Endothelial cell of umbilical vein (primary cell): ENCODE measurements at regions of chr2 and their contacts with region 1.

Region 1: DNA sequence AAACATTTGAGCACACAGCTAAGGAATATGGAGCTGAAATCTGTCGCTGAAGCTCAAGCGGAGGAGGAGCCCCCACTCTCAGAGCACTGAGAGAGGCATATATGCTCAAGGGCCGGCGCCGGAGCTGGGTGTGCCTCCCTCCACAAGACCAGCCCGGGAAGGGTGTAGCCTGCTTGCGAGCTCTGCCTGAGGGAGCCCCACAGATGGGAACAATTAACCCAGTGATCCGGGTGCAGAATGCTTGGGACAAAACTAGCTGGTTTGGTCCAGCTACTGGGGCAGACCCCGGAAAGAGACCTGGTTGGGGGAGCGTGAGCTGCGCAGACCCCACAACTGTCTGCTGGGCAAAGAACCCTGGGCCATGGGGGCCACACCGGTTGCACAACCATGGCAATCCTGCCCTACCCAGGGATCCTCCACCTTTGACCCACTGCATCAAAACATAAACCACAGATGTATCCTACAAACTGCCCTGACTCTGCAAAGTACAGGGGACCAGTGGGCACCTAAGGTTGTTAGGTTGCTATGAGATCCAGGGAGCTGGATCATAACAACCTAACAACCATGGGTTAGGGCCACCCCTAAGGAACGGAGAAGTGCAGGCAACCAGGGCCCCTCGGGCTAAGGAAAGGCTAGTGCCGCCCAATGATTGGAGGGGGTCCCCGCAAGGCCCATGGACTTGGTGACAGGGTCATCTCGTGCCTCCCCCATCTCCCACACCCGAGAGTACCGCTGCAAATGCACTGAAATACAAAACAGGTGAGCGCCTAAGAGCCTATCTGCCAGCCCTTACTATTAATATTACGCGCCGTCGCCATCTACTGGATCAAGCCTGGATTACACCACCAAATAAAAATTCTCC is 53.4 kb upstream of the SCN1A start:
- DNase-seq: peak; percentile 65
- H3K4me3 ChIP-seq: no peak overlapping the region
- H3K27ac ChIP-seq: no peak overlapping the region
- H3K4me1 ChIP-seq: no peaks in the 10 kb centered on the region
- H3K27me3 ChIP-seq: peaks cover 0 to 1% of the 10 kb centered on the region in 2 experiments
- CTCF ChIP-seq: peak; percentile 42 to 57
- POLR2A ChIP-seq: no peak

Region 2: DNA sequence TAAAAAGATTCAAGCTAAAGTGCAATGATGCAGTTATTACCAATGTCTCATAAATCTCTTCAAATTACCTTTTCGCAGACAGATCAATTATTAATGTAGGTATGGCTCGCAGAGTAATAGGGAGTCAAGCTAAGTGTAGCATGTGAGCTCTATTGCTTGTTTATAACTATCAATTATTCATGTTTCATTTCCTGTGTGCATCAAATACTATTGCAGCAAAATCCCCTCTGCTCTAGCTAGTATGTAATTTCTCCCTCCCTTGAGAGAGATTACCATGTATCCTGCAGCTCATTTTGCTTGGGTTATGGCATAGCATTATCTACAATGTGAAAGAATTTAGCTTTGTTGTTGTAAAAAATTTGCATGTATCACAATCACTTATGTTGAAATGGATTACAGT is 12.2 kb after region 1 on chr2:
- CTCF ChIA-PET with region 1: interaction called, 21 read pairs
- POLR2A ChIA-PET with region 1: no interaction called
- dilution Hi-C with region 1: no loop called
- intact Hi-C with region 1: no loop called
- DNase-seq: no peak
- H3K4me3 ChIP-seq: no peak overlapping the region
- H3K27ac ChIP-seq: no peak overlapping the region
- H3K4me1 ChIP-seq: no peaks in the 10 kb centered on the region
- H3K27me3 ChIP-seq: no peaks in the 10 kb centered on the region
- CTCF ChIP-seq: no peak
- POLR2A ChIP-seq: no peak

Region 3: GRCh38 chr2:166384774-166385173 is 203.6 kb after region 1 on chr2:
- CTCF ChIA-PET with region 1: interaction called, 6 read pairs
- POLR2A ChIA-PET with region 1: no interaction called
- dilution Hi-C with region 1: no loop called
- intact Hi-C with region 1: loop called (anchors 1 kb)
- DNase-seq: peak; percentile 58
- H3K4me3 ChIP-seq: no peak overlapping the region
- H3K27ac ChIP-seq: no peak overlapping the region
- H3K4me1 ChIP-seq: peaks cover 14% of the 10 kb centered on the region
- H3K27me3 ChIP-seq: peaks cover 6 to 10% of the 10 kb centered on the region in 2 experiments
- CTCF ChIP-seq: peak; percentile 32 to 37
- POLR2A ChIP-seq: no peak

Region 4: GRCh38 chr2:166516712-166517303 is 335.6 kb after region 1 on chr2:
- CTCF ChIA-PET with region 1: interaction called, 64 read pairs
- POLR2A ChIA-PET with region 1: no interaction called
- dilution Hi-C with region 1: no loop called
- intact Hi-C with region 1: loop called (anchors 1 kb)
- DNase-seq: peak; percentile 61
- H3K4me3 ChIP-seq: no peak overlapping the region
- H3K27ac ChIP-seq: no peak overlapping the region
- H3K4me1 ChIP-seq: no peaks in the 10 kb centered on the region
- H3K27me3 ChIP-seq: no peaks in the 10 kb centered on the region
- CTCF ChIP-seq: peak; percentile 34 to 59
- POLR2A ChIP-seq: no peak

Region 5: DNA sequence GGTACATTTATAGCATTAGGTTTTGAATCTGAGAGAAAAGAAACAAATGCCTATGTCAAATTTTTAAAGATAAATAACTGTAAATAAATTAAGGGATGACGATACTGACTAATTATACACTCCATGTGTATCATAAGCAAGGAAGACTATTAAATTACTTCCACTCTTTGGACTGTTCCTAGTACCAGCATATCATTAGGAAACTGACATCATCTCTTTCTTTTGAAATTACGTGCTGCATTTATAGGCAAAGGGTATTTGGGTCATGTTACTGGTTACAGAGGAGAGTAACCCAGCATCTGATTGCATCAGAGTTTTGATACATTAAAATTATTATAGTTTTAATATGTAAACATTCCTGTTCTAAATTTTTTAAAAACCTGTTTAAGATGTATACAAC is 1016.8 kb after region 1 on chr2:
- CTCF ChIA-PET with region 1: no interaction called
- POLR2A ChIA-PET with region 1: no interaction called
- dilution Hi-C with region 1: no loop called
- intact Hi-C with region 1: no loop called
- DNase-seq: no peak
- H3K4me3 ChIP-seq: no peak overlapping the region
- H3K27ac ChIP-seq: no peak overlapping the region
- H3K4me1 ChIP-seq: no peaks in the 10 kb centered on the region
- H3K27me3 ChIP-seq: no peaks in the 10 kb centered on the region
- CTCF ChIP-seq: no peak
- POLR2A ChIP-seq: no peak